ENCODE measurements at regions of chr14 and their contacts with region 1.

Region 1: GRCh38 chr14:64200170-64200569 is 94.0 kb downstream of the ESR2 start:
- DNase-seq: no peak
- H3K4me3 ChIP-seq: no peak overlapping the region
- CTCF ChIP-seq: no peak

Region 2: DNA sequence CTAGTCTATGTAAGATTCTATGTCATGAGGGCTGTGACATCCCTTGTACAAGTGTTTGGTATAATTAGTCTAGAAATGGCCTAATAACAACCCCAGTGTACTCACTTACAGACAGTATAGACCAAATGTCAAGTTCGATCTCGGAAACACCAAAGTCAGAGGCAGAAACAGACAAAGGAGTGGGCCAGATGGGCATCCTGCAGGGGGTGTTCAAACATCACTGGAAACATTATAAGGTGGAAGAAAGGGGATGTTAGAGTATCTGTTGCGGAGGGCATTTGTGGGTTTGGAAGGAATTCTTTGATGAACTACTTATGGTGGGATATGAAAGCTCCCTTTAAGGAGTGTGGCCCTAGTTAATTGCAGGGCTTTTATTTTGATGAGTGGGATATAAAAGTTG is 40.6 kb before region 1 on chr14:
- in situ Hi-C with region 1: no loop called
- DNase-seq: no peak
- H3K4me3 ChIP-seq: no peak overlapping the region
- CTCF ChIP-seq: no peak

Region 3: GRCh38 chr14:64170181-64170580 is 30.0 kb before region 1 on chr14:
- in situ Hi-C with region 1: loop called (anchors 5 kb)
- DNase-seq: no peak
- H3K4me3 ChIP-seq: no peak overlapping the region
- CTCF ChIP-seq: no peak

Measured in astrocyte of the cerebellum (primary cell).